WTC11 (cell line): ENCODE measurements at regions of chr2 and their contacts with region 1.

Region 1: GRCh38 chr2:106165029-106165428 is 29.1 kb downstream of the UXS1 start:
- DNase-seq: peak; percentile 28
- ATAC-seq: peak; percentile 92
- H3K4me3 Mint-ChIP-seq: no peak overlapping the region; the same call in 1 of the 2 replicates
- H3K27ac Mint-ChIP-seq: peak overlapping the region; percentile 7
- H3K4me1 Mint-ChIP-seq: peaks cover 65% of the 10 kb centered on the region
- H3K27me3 Mint-ChIP-seq: no peaks in the 10 kb centered on the region
- CTCF ChIP-seq: no peak

Region 2: GRCh38 chr2:106104332-106105062 is 60.5 kb before region 1 on chr2:
- CTCF ChIA-PET with region 1: interaction called, 10 read pairs
- POLR2A ChIA-PET with region 1: no interaction called
- DNase-seq: peak; percentile 65
- ATAC-seq: peak; percentile 81
- H3K4me3 Mint-ChIP-seq: no peak overlapping the region
- H3K27ac Mint-ChIP-seq: no peak overlapping the region
- H3K4me1 Mint-ChIP-seq: peaks cover 5% of the 10 kb centered on the region; the same call in 1 of the 2 replicates
- H3K27me3 Mint-ChIP-seq: no peaks in the 10 kb centered on the region
- CTCF ChIP-seq: peak; percentile 88

Region 3: GRCh38 chr2:106176446-106177099 is 11.5 kb after region 1 on chr2:
- CTCF ChIA-PET with region 1: interaction called, 13 read pairs
- POLR2A ChIA-PET with region 1: interaction called, 4 read pairs
- DNase-seq: no peak
- ATAC-seq: peak; percentile 18
- H3K4me3 Mint-ChIP-seq: no peak overlapping the region
- H3K27ac Mint-ChIP-seq: no peak overlapping the region
- H3K4me1 Mint-ChIP-seq: peaks cover 31% of the 10 kb centered on the region
- H3K27me3 Mint-ChIP-seq: no peaks in the 10 kb centered on the region
- CTCF ChIP-seq: no peak